Endothelial cell of umbilical vein (primary cell): ENCODE measurements at regions of chr12 and their contacts with region 1.

Region 1: DNA sequence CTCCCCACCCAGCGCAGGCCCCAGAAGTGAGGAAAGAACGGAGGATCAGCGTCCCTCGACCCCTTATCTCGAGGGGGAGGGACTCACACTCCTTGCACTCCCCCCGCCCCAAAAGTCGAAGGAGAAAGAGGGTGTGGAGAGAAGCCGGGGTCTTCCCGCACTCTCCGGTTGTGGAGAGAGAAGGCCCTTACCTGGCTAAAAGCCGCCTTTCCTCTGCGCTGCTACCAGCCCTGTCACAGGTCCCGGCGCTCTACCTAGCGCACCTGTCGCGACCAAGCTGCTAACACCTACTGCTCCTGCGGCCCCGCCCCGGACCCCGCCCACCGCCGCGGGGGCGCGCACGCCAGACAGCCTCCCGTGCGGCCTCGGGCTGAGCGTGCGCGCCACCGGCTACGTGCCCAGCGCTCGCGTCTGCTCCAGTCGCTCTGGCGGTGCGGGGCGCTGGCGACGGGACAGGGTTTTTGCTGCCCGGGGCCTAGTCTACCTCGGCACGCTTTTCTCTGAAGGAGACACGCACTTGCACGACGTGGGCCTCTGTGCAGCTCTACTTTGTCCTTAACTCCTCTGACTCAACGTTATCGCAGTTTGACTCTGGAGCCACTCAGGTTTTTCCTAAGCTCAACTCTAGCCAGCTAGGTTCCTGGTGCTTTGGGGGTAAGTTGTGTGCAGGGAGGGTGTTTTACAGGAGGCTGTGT is at the start of gene LIMA1:
- DNase-seq: peak; percentile 84
- H3K4me3 ChIP-seq: peak within 1 kb of the TSS; percentile 43 to 76 (median 52)
- H3K27ac ChIP-seq: peak within 1 kb of the TSS; percentile 4
- H3K4me1 ChIP-seq: peaks cover 15% of the 10 kb centered on the region
- H3K27me3 ChIP-seq: no peaks in the 10 kb centered on the region
- CTCF ChIP-seq: peak in 1 of 2 donors; percentile 50
- POLR2A ChIP-seq: peak; percentile 89
- total RNA-seq, gene LIMA1: 81.3 and 87.3 TPM in 2 replicates

Region 2: DNA sequence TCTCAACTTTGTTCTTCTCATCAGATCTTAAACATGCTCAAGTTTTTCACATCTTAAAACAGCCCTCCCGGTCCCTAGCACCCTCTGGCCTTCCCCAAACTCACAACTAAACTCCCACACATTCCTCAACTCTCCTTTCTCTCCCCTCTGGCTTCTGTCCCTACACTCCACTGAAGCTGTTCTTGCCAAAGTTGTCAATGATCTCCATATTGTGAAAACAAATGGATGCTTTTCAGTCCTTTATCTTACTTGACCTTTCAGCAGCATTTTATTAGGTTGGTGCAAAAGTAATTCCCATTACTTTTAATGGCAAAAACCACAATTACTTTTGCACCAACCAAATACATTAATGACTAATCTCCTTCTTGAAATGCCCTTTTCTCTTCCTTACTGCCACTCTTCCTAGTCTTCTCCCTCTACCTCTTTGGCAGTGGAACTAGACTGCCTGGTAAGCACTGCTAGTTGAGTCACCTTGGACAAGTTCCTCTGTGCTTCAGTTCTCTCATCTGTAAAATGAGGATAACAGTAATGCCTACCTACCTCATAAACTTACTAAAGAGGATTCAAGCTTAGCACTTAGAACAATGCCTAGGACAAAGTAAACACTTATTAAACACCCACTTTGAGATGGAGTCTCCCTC is 132.2 kb before region 1 on chr12:
- CTCF ChIA-PET with region 1: no interaction called
- POLR2A ChIA-PET with region 1: no interaction called
- dilution Hi-C with region 1: no loop called
- intact Hi-C with region 1: no loop called
- DNase-seq: no peak
- H3K4me3 ChIP-seq: no peak overlapping the region
- H3K27ac ChIP-seq: no peak overlapping the region
- H3K4me1 ChIP-seq: no peaks in the 10 kb centered on the region
- H3K27me3 ChIP-seq: no peaks in the 10 kb centered on the region
- CTCF ChIP-seq: no peak
- POLR2A ChIP-seq: no peak

Region 3: GRCh38 chr12:50187084-50187900 is 96.1 kb before region 1 on chr12:
- CTCF ChIA-PET with region 1: interaction called, 12 read pairs
- POLR2A ChIA-PET with region 1: no interaction called
- dilution Hi-C with region 1: no loop called
- intact Hi-C with region 1: no loop called
- DNase-seq: no peak
- H3K4me3 ChIP-seq: no peak overlapping the region
- H3K27ac ChIP-seq: peak overlapping the region; percentile 90
- H3K4me1 ChIP-seq: peaks cover 40% of the 10 kb centered on the region
- H3K27me3 ChIP-seq: no peaks in the 10 kb centered on the region
- CTCF ChIP-seq: no peak
- POLR2A ChIP-seq: no peak

Region 4: GRCh38 chr12:50195832-50196231 is 87.5 kb before region 1 on chr12:
- CTCF ChIA-PET with region 1: no interaction called
- POLR2A ChIA-PET with region 1: no interaction called
- dilution Hi-C with region 1: no loop called
- intact Hi-C with region 1: loop called (anchors 1 kb)
- DNase-seq: no peak
- H3K4me3 ChIP-seq: no peak overlapping the region
- H3K27ac ChIP-seq: no peak overlapping the region
- H3K4me1 ChIP-seq: peaks cover 32% of the 10 kb centered on the region
- H3K27me3 ChIP-seq: no peaks in the 10 kb centered on the region
- CTCF ChIP-seq: no peak
- POLR2A ChIP-seq: no peak